H1 (cell line): ENCODE measurements at regions of chr12 and their contacts with region 1.

Region 1: GRCh38 chr12:4591180-4591687 is 29.2 kb downstream of the DYRK4 start:
- DNase-seq: no peak
- H3K4me3 ChIP-seq: no peak overlapping the region
- H3K27ac ChIP-seq: no peak overlapping the region
- H3K4me1 ChIP-seq: no peaks in the 10 kb centered on the region
- H3K27me3 ChIP-seq: no peaks in the 10 kb centered on the region; a peak in 2 of 7 replicates
- CTCF ChIP-seq: no peak
- EP300 ChIP-seq: no peak
- POLR2A ChIP-seq: no peak
- RAD21 ChIP-seq: no peak

Region 2: GRCh38 chr12:4555804-4556203 is 35.4 kb before region 1 on chr12:
- CTCF ChIA-PET with region 1: no interaction called
- POLR2A ChIA-PET with region 1: no interaction called
- DNase-seq: no peak
- H3K4me3 ChIP-seq: no peak overlapping the region
- H3K27ac ChIP-seq: no peak overlapping the region
- H3K4me1 ChIP-seq: no peaks in the 10 kb centered on the region
- H3K27me3 ChIP-seq: peaks cover 0 to 1% (median 0%) of the 10 kb centered on the region in 4 experiments; a peak in 1 of 7 replicates
- CTCF ChIP-seq: no peak
- EP300 ChIP-seq: no peak
- POLR2A ChIP-seq: no peak
- RAD21 ChIP-seq: no peak

Region 3: DNA sequence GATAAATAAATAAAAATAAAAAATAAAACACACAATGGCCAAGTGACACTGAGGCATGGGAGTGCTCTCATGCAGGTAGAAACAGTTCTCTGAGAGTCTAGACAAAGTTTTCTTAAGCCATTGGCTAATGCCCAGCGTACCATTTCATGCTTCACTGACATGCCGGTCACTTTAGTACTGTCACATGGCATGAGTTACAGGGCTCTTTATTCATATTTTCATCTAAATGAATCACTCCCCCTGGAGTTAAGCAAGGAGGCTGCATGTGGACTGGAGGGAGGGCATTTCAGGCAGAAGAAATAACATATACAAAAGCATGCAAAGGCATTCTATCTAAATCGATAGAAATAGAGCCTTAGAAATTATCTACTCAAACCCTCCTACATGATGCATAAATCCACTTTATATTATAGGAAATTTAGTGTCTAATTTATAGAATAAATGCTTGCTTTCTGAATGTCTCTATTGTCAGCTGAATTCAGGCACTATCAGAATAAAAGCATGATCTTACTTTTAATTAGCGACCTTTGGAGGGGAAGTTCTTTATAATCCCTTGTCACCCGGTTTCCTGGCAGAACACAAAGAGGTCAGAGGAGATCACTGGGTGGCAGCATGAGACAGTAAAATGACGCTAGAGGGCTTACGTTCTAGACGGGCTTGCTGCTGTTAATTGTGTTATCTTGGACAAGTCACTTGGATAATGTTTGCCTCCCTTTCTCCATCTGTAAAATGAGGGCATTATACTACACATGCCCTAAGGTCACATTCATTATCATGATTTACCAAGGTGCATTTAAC is 11.7 kb before region 1 on chr12:
- CTCF ChIA-PET with region 1: interaction called, 18 read pairs
- POLR2A ChIA-PET with region 1: interaction called, 3 read pairs
- DNase-seq: no peak
- H3K4me3 ChIP-seq: no peak overlapping the region
- H3K27ac ChIP-seq: no peak overlapping the region
- H3K4me1 ChIP-seq: peaks cover 0 to 10% (median 2%) of the 10 kb centered on the region in 4 experiments; a peak in 3 of 7 replicates
- H3K27me3 ChIP-seq: no peaks in the 10 kb centered on the region
- CTCF ChIP-seq: peak; percentile 29 to 63 (median 51)
- EP300 ChIP-seq: no peak
- POLR2A ChIP-seq: no peak
- RAD21 ChIP-seq: peak; percentile 72 to 84

Region 4: DNA sequence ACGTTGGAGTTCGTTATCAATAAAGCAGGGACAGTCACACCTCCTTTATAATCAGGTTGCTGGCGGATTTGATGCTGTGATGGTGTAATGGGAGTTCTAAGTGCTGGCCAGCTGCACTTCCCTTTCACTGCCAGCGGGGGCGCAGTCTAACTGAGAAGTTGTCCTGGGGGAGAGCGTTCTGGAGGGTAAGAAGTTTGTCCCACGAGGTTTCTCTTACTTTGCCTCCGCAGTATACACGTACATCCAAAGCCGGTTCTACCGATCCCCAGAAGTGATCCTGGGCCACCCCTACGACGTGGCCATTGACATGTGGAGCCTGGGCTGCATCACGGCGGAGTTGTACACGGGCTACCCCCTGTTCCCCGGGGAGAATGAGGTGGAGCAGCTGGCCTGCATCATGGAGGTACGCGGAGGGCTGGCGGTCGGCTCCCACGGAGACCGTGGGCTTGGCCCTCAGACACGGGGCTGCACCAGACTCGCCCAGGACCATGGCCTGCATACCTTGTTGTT is 13.5 kb after region 1 on chr12:
- CTCF ChIA-PET with region 1: interaction called, 50 read pairs
- POLR2A ChIA-PET with region 1: interaction called, 4 read pairs
- DNase-seq: peak; percentile 21 to 79
- H3K4me3 ChIP-seq: peak overlapping the region; percentile 68 to 96 (median 86)
- H3K27ac ChIP-seq: peak overlapping the region; percentile 27; the same call in 1 of the 2 replicates
- H3K4me1 ChIP-seq: no peaks in the 10 kb centered on the region
- H3K27me3 ChIP-seq: no peaks in the 10 kb centered on the region
- CTCF ChIP-seq: peak; percentile 83 to 98 (median 91)
- EP300 ChIP-seq: 0 out of 3 replicates have a peak, but pooled peaks of 1 of the 2 experiments have one; percentile 8
- POLR2A ChIP-seq: peak in 1 of 2 experiments; percentile 55; a peak in 2 of 3 replicates
- RAD21 ChIP-seq: peak; percentile 68 to 78

Region 5: GRCh38 chr12:4663971-4664505 is 72.8 kb after region 1 on chr12:
- CTCF ChIA-PET with region 1: no interaction called
- POLR2A ChIA-PET with region 1: no interaction called
- DNase-seq: no peak
- H3K4me3 ChIP-seq: no peak overlapping the region
- H3K27ac ChIP-seq: no peak overlapping the region
- H3K4me1 ChIP-seq: no peaks in the 10 kb centered on the region
- H3K27me3 ChIP-seq: no peaks in the 10 kb centered on the region
- CTCF ChIP-seq: no peak
- EP300 ChIP-seq: no peak
- POLR2A ChIP-seq: no peak
- RAD21 ChIP-seq: no peak